HCT116 (cell line): ENCODE measurements at regions of chr6 and their contacts with region 1.

Region 1: GRCh38 chr6:46113353-46113752 is 16.4 kb upstream of the ENPP4 start:
- DNase-seq: no peak
- ATAC-seq: peak; percentile 93
- H3K4me3 ChIP-seq: no peak overlapping the region
- H3K27ac ChIP-seq: no peak overlapping the region
- H3K4me1 ChIP-seq: peaks cover 11 to 12% of the 10 kb centered on the region in 2 experiments
- H3K27me3 ChIP-seq: no peaks in the 10 kb centered on the region
- CTCF ChIP-seq: no peak
- POLR2A ChIP-seq: no peak
- RAD21 ChIP-seq: no peak

Region 2: DNA sequence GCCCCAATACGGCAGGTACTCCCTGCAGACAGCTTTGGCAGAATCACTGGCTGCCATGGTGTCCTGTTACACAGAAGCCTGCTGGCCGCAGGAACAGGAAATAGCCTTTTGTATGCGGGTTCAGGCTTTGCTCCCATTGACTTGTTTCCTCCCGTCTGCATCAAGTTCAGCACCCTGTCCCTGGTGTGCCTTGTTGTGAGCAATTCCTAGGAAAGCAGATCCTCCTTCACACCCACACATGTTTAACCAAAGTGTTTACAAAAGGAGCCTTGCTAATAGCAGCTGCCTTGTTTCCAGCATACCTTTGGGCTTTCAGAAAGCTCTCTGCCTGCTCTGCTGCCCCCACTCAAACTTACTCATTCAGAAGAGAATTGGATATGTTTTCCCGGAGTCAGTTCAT is 608.4 kb before region 1 on chr6:
- CTCF ChIA-PET with region 1: no interaction called
- POLR2A ChIA-PET with region 1: no interaction called
- RAD21 ChIA-PET with region 1: no interaction called
- intact Hi-C with region 1: no loop called
- DNase-seq: no peak
- ATAC-seq: peak; percentile 49
- H3K4me3 ChIP-seq: no peak overlapping the region
- H3K27ac ChIP-seq: no peak overlapping the region
- H3K4me1 ChIP-seq: peaks cover 21 to 29% of the 10 kb centered on the region in 2 experiments; a peak in 3 of 4 replicates
- H3K27me3 ChIP-seq: no peaks in the 10 kb centered on the region
- CTCF ChIP-seq: no peak
- POLR2A ChIP-seq: no peak
- RAD21 ChIP-seq: no peak

Region 3: GRCh38 chr6:46129629-46130511 is 16.5 kb after region 1 on chr6 and contains the start of gene ENPP4:
- CTCF ChIA-PET with region 1: no interaction called
- POLR2A ChIA-PET with region 1: no interaction called
- RAD21 ChIA-PET with region 1: no interaction called
- intact Hi-C with region 1: loop called (anchors 2 kb)
- DNase-seq: peak; percentile 95
- ATAC-seq: peak; percentile 100
- H3K4me3 ChIP-seq: peak within 1 kb of the TSS; percentile 86 to 92
- H3K27ac ChIP-seq: peak within 1 kb of the TSS; percentile 39; the same call in 1 of the 2 replicates
- H3K4me1 ChIP-seq: peaks cover 3 to 11% of the 10 kb centered on the region in 2 experiments; a peak in 3 of 4 replicates
- H3K27me3 ChIP-seq: no peaks in the 10 kb centered on the region
- CTCF ChIP-seq: no peak
- POLR2A ChIP-seq: no peak
- RAD21 ChIP-seq: no peak
- total RNA-seq, gene ENPP4: 9.6 TPM